ENCODE measurements at regions of chr3 and their contacts with region 1.

Region 1: GRCh38 chr3:52056968-52057805 is 816 bp upstream of the DUSP7 start:
- DNase-seq: peak; percentile 97
- ATAC-seq: peak; percentile 84
- H3K4me3 ChIP-seq: peak overlapping the region; percentile 56 to 61
- H3K27ac ChIP-seq: peak overlapping the region; percentile 83
- H3K4me1 ChIP-seq: peaks cover 26 to 47% of the 10 kb centered on the region in 2 experiments
- H3K27me3 ChIP-seq: no peaks in the 10 kb centered on the region
- CTCF ChIP-seq: no peak
- POLR2A ChIP-seq: no peak
- RAD21 ChIP-seq: no peak

Region 2: DNA sequence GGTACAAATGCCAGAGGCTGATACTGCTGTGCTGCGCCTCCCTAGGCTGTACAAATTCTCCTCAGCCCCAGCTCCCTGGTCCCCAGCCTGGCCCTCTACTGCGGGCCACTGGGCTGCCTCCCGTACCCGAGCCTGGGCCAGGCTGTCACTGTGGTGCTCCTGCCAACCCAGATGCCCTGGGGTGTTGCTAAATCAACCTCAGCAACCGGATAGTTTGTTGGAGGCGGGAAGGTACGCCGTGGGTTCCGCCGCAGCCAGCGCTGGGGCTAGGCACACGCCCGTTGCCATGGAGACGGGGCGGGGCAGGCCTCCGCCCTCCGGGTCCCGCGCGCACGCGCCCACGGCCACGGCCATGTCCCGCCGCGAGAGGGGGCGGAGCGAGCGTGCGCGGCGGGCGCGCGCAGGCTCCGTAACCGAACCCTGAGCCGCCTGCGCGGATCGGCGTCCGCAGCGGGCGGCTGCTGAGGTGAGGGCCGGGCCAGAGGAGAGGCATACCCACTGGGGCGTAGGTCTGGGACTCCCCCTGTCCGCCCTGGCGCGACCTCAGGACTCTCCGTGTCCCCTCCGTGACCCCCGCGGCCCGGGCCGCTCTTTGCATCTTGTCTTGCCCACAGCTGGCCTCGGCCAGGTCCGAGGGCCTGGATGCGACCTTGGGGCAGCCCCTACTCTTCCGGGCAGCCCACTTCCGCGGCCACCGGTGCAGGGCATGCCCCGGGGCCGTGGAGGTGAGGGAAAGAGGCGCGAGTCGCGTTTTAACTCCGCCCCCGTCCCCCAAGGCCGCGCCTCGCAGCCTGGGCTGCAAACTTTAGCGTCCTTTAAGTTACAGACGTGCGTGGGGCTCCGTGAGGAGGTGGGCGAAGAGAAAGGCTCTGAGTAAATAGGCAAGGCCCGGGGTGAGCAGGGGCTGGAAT is 386.1 kb before region 1 on chr3 and contains the start of gene TEX264:
- CTCF ChIA-PET with region 1: no interaction called
- POLR2A ChIA-PET with region 1: no interaction called
- RAD21 ChIA-PET with region 1: no interaction called
- intact Hi-C with region 1: no loop called
- DNase-seq: peak; percentile 37
- ATAC-seq: peak; percentile 76
- H3K4me3 ChIP-seq: peak within 1 kb of the TSS; percentile 85 to 92
- H3K27ac ChIP-seq: peak within 1 kb of the TSS; percentile 99
- H3K4me1 ChIP-seq: peaks cover 17 to 51% of the 10 kb centered on the region in 2 experiments
- H3K27me3 ChIP-seq: no peaks in the 10 kb centered on the region
- CTCF ChIP-seq: no peak
- POLR2A ChIP-seq: peak; percentile 92
- RAD21 ChIP-seq: no peak
- total RNA-seq, gene TEX264: 36.0 TPM

Region 3: DNA sequence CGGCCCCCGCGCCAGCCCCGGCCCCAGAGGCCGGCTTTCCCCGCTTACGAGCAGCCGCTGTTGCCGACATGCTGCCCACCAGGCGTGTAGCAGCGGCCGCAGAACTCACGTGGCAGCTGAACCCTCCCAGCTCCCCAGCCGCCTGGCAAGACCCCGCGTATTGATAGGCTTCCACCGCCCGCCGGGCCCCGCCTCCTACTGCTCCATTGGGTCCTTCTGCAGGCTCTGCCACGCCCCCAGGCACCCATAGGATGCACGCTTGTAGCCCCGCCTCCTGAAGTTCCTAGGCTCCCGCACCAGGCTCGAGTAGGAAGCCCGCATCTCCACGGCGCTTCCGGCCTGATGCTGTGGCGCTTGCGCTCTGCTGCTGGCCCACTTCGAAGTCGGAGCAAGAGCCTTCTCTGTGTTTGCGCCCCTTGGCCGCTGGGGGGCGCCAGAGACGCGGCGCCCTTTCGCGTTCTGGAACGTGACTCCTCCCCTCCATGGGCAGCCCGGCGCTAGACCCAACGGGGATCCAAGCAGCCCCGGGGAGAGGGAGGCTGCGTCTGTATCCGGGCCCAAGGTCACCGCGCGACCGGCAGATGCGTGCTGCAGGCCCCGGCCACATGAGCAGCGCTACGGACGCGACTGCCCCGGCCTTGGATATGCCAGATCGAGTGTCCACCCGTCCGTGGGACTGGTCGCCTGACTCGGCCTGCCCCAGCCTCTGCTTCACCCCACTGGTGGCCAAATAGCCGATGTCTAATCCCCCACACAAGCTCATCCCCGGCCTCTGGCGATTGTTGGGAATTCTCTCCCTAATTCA is 115.2 kb before region 1 on chr3 and contains the starts of genes PARP3 and RRP9:
- CTCF ChIA-PET with region 1: interaction called, 6 read pairs
- POLR2A ChIA-PET with region 1: no interaction called
- RAD21 ChIA-PET with region 1: interaction called in 1 of 2 experiments, 5 read pairs
- intact Hi-C with region 1: loop called (anchors 1 kb)
- DNase-seq: peak; percentile 99
- ATAC-seq: peak; percentile 89
- H3K4me3 ChIP-seq: peak within 1 kb of the TSS; percentile 82 to 89
- H3K27ac ChIP-seq: peak within 1 kb of the TSS; percentile 96
- H3K4me1 ChIP-seq: peaks cover 23 to 29% of the 10 kb centered on the region in 2 experiments
- H3K27me3 ChIP-seq: no peaks in the 10 kb centered on the region
- CTCF ChIP-seq: peak in 2 of 3 experiments; percentile 95 to 99; a peak in 4 of 6 replicates
- POLR2A ChIP-seq: no peak
- RAD21 ChIP-seq: no peak
- total RNA-seq, gene PARP3: 17.5 TPM
- total RNA-seq, gene RRP9: 71.3 TPM

Region 4: DNA sequence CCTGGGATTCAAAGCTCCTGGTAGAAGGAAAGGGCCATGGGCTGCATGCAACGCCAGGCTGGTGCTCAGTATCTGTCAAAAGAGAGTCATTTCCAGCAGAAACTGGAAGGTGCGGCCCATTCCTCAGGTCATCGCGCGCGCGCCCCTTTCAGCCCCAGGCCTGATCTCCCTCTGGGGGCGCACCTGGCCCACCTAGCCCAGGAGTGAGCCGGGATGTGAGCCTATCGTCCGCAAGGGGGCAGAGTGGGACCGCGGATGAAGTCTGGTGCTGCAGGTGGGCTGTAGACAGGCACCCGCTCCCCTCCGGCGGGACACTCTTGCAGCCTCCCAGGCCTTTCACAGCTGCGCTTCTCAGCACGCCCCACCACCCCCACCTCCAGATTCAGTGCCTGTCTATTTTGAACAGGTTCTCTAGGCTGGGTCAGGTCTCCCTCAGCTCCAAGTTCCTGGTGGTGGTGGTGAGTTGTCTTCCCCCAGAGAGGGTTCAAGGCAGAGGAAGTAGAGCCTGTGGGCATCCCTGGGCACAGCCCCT is 55.7 kb before region 1 on chr3:
- CTCF ChIA-PET with region 1: interaction called, 7 read pairs
- POLR2A ChIA-PET with region 1: interaction called, 3 read pairs
- RAD21 ChIA-PET with region 1: interaction called in 1 of 2 experiments, 5 read pairs
- intact Hi-C with region 1: loop called (anchors 2 kb)
- DNase-seq: peak; percentile 59
- ATAC-seq: peak; percentile 96
- H3K4me3 ChIP-seq: no peak overlapping the region
- H3K27ac ChIP-seq: no peak overlapping the region; the same call in 1 of the 2 replicates
- H3K4me1 ChIP-seq: peaks cover 11 to 35% of the 10 kb centered on the region in 2 experiments
- H3K27me3 ChIP-seq: no peaks in the 10 kb centered on the region
- CTCF ChIP-seq: peak in 2 of 3 experiments; percentile 95 to 98; a peak in 4 of 6 replicates
- POLR2A ChIP-seq: no peak
- RAD21 ChIP-seq: no peak

Region 5: GRCh38 chr3:52123106-52123725 is 66.0 kb after region 1 on chr3:
- CTCF ChIA-PET with region 1: interaction called, 18 read pairs
- POLR2A ChIA-PET with region 1: interaction called, 3 read pairs
- RAD21 ChIA-PET with region 1: interaction called, 6 to 7 read pairs
- intact Hi-C with region 1: loop called (anchors 2 kb)
- DNase-seq: peak; percentile 37
- ATAC-seq: peak; percentile 86
- H3K4me3 ChIP-seq: no peak overlapping the region
- H3K27ac ChIP-seq: no peak overlapping the region
- H3K4me1 ChIP-seq: peaks cover 16 to 23% of the 10 kb centered on the region in 2 experiments
- H3K27me3 ChIP-seq: no peaks in the 10 kb centered on the region
- CTCF ChIP-seq: peak; percentile 90 to 99 (median 97)
- POLR2A ChIP-seq: no peak
- RAD21 ChIP-seq: peak; percentile 93

Region 6: GRCh38 chr3:52154117-52155094 is 97.2 kb after region 1 on chr3 and contains the start of gene POC1A:
- CTCF ChIA-PET with region 1: interaction called, 4 read pairs
- POLR2A ChIA-PET with region 1: interaction called, 8 read pairs
- RAD21 ChIA-PET with region 1: interaction called in 1 of 2 experiments, 4 read pairs
- intact Hi-C with region 1: loop called (anchors 1 kb)
- DNase-seq: peak; percentile 97
- ATAC-seq: peak; percentile 89
- H3K4me3 ChIP-seq: peak within 1 kb of the TSS; percentile 86 to 92
- H3K27ac ChIP-seq: peak within 1 kb of the TSS; percentile 62
- H3K4me1 ChIP-seq: peaks cover 8 to 30% of the 10 kb centered on the region in 2 experiments
- H3K27me3 ChIP-seq: no peaks in the 10 kb centered on the region
- CTCF ChIP-seq: no peak
- POLR2A ChIP-seq: peak; percentile 59
- RAD21 ChIP-seq: no peak
- total RNA-seq, gene POC1A: 34.0 TPM

Region 7: GRCh38 chr3:52278510-52279069 is 221.4 kb after region 1 on chr3 and contains the start of gene WDR82:
- CTCF ChIA-PET with region 1: no interaction called
- POLR2A ChIA-PET with region 1: no interaction called
- RAD21 ChIA-PET with region 1: no interaction called
- intact Hi-C with region 1: no loop called
- DNase-seq: peak; percentile 79
- ATAC-seq: peak; percentile 89
- H3K4me3 ChIP-seq: peak within 1 kb of the TSS; percentile 94 to 99
- H3K27ac ChIP-seq: peak within 1 kb of the TSS; percentile 93
- H3K4me1 ChIP-seq: peaks cover 15 to 53% of the 10 kb centered on the region in 2 experiments; a peak in 3 of 4 replicates
- H3K27me3 ChIP-seq: no peaks in the 10 kb centered on the region
- CTCF ChIP-seq: peak in 2 of 3 experiments; percentile 49 to 54; a peak in 4 of 6 replicates
- POLR2A ChIP-seq: peak; percentile 56
- RAD21 ChIP-seq: peak; percentile 31; the same call in 1 of the 2 replicates
- total RNA-seq, gene WDR82: 89.7 TPM